ENCODE measurements at regions of chr4 and their contacts with region 1.

Region 1: DNA sequence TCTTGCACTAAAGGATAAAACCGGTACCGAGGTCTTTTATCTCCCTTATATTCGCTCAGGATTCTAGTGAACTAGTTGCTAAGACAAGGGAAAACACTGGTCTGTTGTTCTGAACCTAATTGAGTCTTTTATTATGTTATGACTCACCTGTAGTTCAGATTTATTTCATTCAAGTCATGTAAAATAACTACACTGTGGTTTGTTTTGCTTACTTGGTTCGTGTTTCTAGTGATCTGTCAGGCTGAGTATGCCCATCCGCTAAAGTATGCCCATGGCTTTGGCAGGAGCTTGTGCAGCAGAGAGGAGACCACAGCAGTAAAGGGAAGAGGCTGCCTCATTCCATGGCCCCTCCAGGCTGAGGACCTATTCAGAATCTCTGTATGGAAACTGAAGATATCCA is 126.1 kb downstream of the AFF1 start:
- DNase-seq: peak; percentile 88
- ATAC-seq: peak; percentile 93
- H3K4me3 ChIP-seq: peak overlapping the region; percentile 12; the same call in 1 of the 2 replicates
- H3K27ac ChIP-seq: peak overlapping the region; percentile 85
- H3K4me1 ChIP-seq: peaks cover 50% of the 10 kb centered on the region
- H3K27me3 ChIP-seq: no peaks in the 10 kb centered on the region
- CTCF ChIP-seq: no peak

Region 2: DNA sequence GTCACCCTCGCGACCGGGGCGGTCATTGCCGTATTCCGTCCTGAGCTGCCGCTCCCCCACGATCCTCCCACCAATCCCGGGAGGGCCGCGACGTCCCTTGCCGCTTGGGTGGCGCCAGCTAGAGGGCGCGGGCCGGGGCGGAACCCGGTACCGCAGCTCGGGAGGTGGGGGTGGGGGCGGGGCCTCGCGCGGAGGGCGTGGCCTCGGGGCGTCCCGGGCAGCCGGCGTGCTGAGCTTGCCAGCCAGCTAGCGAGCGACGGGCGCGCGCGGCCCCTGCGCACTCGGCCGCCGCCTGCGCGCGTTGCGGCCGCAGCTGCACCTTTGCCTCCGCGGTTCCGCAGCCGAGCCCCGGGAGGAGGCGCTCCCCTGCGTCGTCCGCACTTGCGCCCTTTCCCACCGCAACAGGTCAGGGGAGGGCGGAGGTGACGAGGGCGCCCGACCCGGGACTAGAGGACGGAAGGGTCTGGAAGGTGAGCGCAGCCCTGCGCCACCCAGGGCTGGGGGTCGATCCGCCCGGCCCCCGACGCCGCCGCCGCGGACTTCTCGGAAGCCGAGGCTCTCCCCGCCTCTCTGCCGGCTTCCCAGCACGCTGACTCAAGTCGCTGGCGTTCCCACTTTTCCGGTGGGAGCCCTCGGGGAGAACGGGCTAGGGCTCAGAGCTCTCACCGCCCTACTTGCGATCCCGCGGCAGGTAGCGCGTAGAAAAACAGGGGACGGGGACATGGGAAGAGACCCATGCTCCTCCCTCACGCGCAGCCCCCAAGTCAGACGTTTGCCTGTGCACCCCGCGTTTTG is 126.0 kb before region 1 on chr4 and contains the start of gene AFF1:
- CTCF ChIA-PET with region 1: no interaction called
- POLR2A ChIA-PET with region 1: no interaction called
- intact Hi-C with region 1: loop called (anchors 5 kb)
- DNase-seq: peak; percentile 89
- ATAC-seq: peak; percentile 70
- H3K4me3 ChIP-seq: peak within 1 kb of the TSS; percentile 83
- H3K27ac ChIP-seq: peak within 1 kb of the TSS; percentile 87
- H3K4me1 ChIP-seq: peaks cover 29% of the 10 kb centered on the region
- H3K27me3 ChIP-seq: no peaks in the 10 kb centered on the region
- CTCF ChIP-seq: no peak
- total RNA-seq, gene AFF1: 8.1 and 9.4 TPM in 2 replicates

Region 3: GRCh38 chr4:87103691-87104187 is 42.8 kb after region 1 on chr4:
- CTCF ChIA-PET with region 1: no interaction called
- POLR2A ChIA-PET with region 1: no interaction called
- intact Hi-C with region 1: loop called (anchors 1 kb)
- DNase-seq: peak; percentile 92
- ATAC-seq: peak; percentile 78
- H3K4me3 ChIP-seq: peak overlapping the region; percentile 46
- H3K27ac ChIP-seq: peak overlapping the region; percentile 84
- H3K4me1 ChIP-seq: peaks cover 38% of the 10 kb centered on the region
- H3K27me3 ChIP-seq: no peaks in the 10 kb centered on the region
- CTCF ChIP-seq: no peak